ENCODE measurements at regions of chrX and their contacts with region 1.

Region 1: DNA sequence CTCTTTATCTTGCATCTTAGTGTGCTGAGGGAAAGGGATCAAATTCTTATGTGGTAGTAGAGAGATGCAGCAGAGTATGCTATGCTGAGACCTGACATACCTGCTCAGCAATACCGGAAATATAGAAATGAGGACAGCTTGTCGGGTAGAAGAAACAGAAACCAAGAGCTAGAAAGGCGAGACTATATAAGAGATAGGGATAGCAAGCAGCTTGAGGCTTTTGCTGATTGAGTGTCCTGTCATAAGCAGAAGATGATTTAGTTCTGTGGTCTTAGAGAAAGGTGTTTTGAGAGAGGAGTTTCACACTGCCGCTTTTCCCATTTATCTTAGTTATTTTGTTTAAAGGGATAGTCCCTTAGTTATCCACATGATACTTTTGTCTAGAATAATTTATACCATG is 31.7 kb downstream of the USP9X start:
- DNase-seq: peak; percentile 28
- H3K4me3 ChIP-seq: peak overlapping the region in 2 of 3 experiments; percentile 13 to 29
- H3K27ac ChIP-seq: peak overlapping the region; percentile 29
- H3K4me1 ChIP-seq: peaks cover 5% of the 10 kb centered on the region
- H3K27me3 ChIP-seq: no peaks in the 10 kb centered on the region
- CTCF ChIP-seq: no peak

Region 2: GRCh38 chrX:40539214-40540142 is 577.5 kb before region 1 on chrX:
- CTCF ChIA-PET with region 1: no interaction called
- dilution Hi-C with region 1: no loop called
- in situ Hi-C with region 1: no loop called
- intact Hi-C with region 1: loop called (anchors 5 kb)
- DNase-seq: peak; percentile 32
- H3K4me3 ChIP-seq: no peak overlapping the region
- H3K27ac ChIP-seq: no peak overlapping the region
- H3K4me1 ChIP-seq: no peaks in the 10 kb centered on the region
- H3K27me3 ChIP-seq: peaks cover 8% of the 10 kb centered on the region
- CTCF ChIP-seq: peak in 1 of 2 donors; percentile 13

Region 3: DNA sequence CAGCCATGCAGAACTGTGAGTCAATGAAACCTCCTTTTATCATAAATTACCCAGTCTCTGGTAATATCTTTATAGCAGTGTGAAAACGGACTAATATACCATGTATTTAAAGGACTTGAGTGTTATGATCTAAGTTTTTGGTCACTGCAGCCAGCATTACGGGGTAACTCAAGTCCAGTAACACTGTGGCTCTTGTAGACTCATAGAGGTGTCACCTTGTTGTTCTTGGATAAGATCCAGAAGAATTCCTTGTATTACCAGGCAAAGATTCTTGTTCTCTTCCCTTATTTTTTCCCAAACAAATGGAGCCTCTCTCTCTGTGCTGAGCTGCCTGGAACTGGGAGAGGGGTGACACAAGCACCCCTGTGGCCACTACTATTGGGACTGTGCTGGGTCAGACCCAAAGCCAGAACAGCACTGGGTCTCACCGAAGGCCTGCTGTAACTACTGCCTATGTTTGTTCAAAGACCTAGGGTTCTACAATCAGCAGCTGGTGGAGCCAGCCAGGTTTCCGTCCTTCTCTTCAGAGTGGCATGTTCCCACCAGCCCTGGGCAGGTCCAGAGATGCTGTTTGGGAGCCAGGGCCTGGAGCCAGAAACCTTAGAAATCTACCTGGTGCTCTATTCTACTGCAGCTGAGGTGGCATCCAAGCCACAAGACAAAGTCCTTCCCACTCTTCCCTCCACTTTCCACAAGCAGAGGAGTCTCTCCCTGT is 337.9 kb before region 1 on chrX:
- CTCF ChIA-PET with region 1: no interaction called
- dilution Hi-C with region 1: no loop called
- in situ Hi-C with region 1: loop called in 1 of 2 experiments (anchors 25 kb)
- intact Hi-C with region 1: no loop called
- DNase-seq: peak; percentile 69
- H3K4me3 ChIP-seq: no peak overlapping the region
- H3K27ac ChIP-seq: no peak overlapping the region
- H3K4me1 ChIP-seq: peaks cover 13% of the 10 kb centered on the region
- H3K27me3 ChIP-seq: no peaks in the 10 kb centered on the region
- CTCF ChIP-seq: no peak

Region 4: GRCh38 chrX:40843641-40844040 is 273.3 kb before region 1 on chrX:
- CTCF ChIA-PET with region 1: no interaction called
- dilution Hi-C with region 1: no loop called
- in situ Hi-C with region 1: no loop called
- intact Hi-C with region 1: no loop called
- DNase-seq: peak; percentile 37
- H3K4me3 ChIP-seq: no peak overlapping the region
- H3K27ac ChIP-seq: no peak overlapping the region
- H3K4me1 ChIP-seq: peaks cover 4% of the 10 kb centered on the region
- H3K27me3 ChIP-seq: no peaks in the 10 kb centered on the region
- CTCF ChIP-seq: no peak

Region 5: GRCh38 chrX:40877887-40878286 is 239.1 kb before region 1 on chrX:
- CTCF ChIA-PET with region 1: interaction called, 3 read pairs
- dilution Hi-C with region 1: no loop called
- in situ Hi-C with region 1: no loop called
- intact Hi-C with region 1: loop called (anchors 1 kb)
- DNase-seq: peak; percentile 9
- H3K4me3 ChIP-seq: no peak overlapping the region
- H3K27ac ChIP-seq: no peak overlapping the region
- H3K4me1 ChIP-seq: no peaks in the 10 kb centered on the region
- H3K27me3 ChIP-seq: peaks cover 3% of the 10 kb centered on the region
- CTCF ChIP-seq: peak; percentile 28 to 59

Region 6: GRCh38 chrX:40952855-40953254 is 164.1 kb before region 1 on chrX:
- CTCF ChIA-PET with region 1: no interaction called
- dilution Hi-C with region 1: no loop called
- in situ Hi-C with region 1: loop called in 1 of 2 experiments (anchors 25 kb)
- intact Hi-C with region 1: no loop called
- DNase-seq: no peak
- H3K4me3 ChIP-seq: peak overlapping the region in 1 of 3 experiments; percentile 11
- H3K27ac ChIP-seq: no peak overlapping the region
- H3K4me1 ChIP-seq: no peaks in the 10 kb centered on the region
- H3K27me3 ChIP-seq: peaks cover 2% of the 10 kb centered on the region
- CTCF ChIP-seq: no peak

Measured in mammary epithelial cell (primary cell).